B cell (primary cell): ENCODE measurements at regions of chr7 and their contacts with region 1.

Region 1: GRCh38 chr7:1065263-1066260 is 21.2 kb downstream of the GPR146 start:
- DNase-seq: peak; percentile 88
- ATAC-seq: peak; percentile 68
- H3K4me3 ChIP-seq: peak overlapping the region in 3 of 5 experiments; percentile 12 to 47 (median 31)
- H3K4me3 Mint-ChIP-seq: peak overlapping the region; percentile 80
- H3K27ac ChIP-seq: no peak overlapping the region
- H3K27ac Mint-ChIP-seq: peak overlapping the region; percentile 57
- H3K4me1 ChIP-seq: peaks cover 30 to 42% of the 10 kb centered on the region in 2 donors
- H3K4me1 Mint-ChIP-seq: peaks cover 44% of the 10 kb centered on the region
- H3K27me3 ChIP-seq: peaks cover 0 to 33% (median 14%) of the 10 kb centered on the region in 4 experiments
- H3K27me3 Mint-ChIP-seq: peaks cover 18% of the 10 kb centered on the region
- CTCF ChIP-seq: peak; percentile 90

Region 2: GRCh38 chr7:974820-975681 is 90.5 kb before region 1 on chr7 and contains the start of gene COX19:
- CTCF ChIA-PET with region 1: interaction called, 23 read pairs
- POLR2A ChIA-PET with region 1: no interaction called
- intact Hi-C with region 1: no loop called
- DNase-seq: peak; percentile 91
- ATAC-seq: peak; percentile 86
- H3K4me3 ChIP-seq: peak within 1 kb of the TSS; percentile 66 to 99 (median 91)
- H3K4me3 Mint-ChIP-seq: peak within 1 kb of the TSS; percentile 94
- H3K27ac ChIP-seq: peak within 1 kb of the TSS; percentile 93 to 95
- H3K27ac Mint-ChIP-seq: peak within 1 kb of the TSS; percentile 92
- H3K4me1 ChIP-seq: peaks cover 16 to 22% of the 10 kb centered on the region in 2 donors
- H3K4me1 Mint-ChIP-seq: peaks cover 24% of the 10 kb centered on the region
- H3K27me3 ChIP-seq: peaks cover 0 to 3% (median 0%) of the 10 kb centered on the region in 4 experiments
- H3K27me3 Mint-ChIP-seq: no peaks in the 10 kb centered on the region
- CTCF ChIP-seq: no peak
- total RNA-seq, gene COX19: 38.3 and 44.6 TPM in 2 replicates

Region 3: GRCh38 chr7:1028031-1028770 is 37.4 kb before region 1 on chr7:
- CTCF ChIA-PET with region 1: interaction called, 57 read pairs
- POLR2A ChIA-PET with region 1: interaction called, 10 read pairs
- intact Hi-C with region 1: loop called (anchors 1 kb)
- DNase-seq: peak; percentile 89
- ATAC-seq: peak; percentile 53
- H3K4me3 ChIP-seq: peak overlapping the region in 4 of 5 experiments; percentile 50 to 65 (median 58)
- H3K4me3 Mint-ChIP-seq: peak overlapping the region; percentile 89
- H3K27ac ChIP-seq: peak overlapping the region; percentile 47 to 56
- H3K27ac Mint-ChIP-seq: peak overlapping the region; percentile 82
- H3K4me1 ChIP-seq: peaks cover 59 to 72% of the 10 kb centered on the region in 2 donors
- H3K4me1 Mint-ChIP-seq: peaks cover 64% of the 10 kb centered on the region
- H3K27me3 ChIP-seq: peaks cover 0 to 4% (median 1%) of the 10 kb centered on the region in 4 experiments
- H3K27me3 Mint-ChIP-seq: peaks cover 3% of the 10 kb centered on the region
- CTCF ChIP-seq: no peak

Region 4: DNA sequence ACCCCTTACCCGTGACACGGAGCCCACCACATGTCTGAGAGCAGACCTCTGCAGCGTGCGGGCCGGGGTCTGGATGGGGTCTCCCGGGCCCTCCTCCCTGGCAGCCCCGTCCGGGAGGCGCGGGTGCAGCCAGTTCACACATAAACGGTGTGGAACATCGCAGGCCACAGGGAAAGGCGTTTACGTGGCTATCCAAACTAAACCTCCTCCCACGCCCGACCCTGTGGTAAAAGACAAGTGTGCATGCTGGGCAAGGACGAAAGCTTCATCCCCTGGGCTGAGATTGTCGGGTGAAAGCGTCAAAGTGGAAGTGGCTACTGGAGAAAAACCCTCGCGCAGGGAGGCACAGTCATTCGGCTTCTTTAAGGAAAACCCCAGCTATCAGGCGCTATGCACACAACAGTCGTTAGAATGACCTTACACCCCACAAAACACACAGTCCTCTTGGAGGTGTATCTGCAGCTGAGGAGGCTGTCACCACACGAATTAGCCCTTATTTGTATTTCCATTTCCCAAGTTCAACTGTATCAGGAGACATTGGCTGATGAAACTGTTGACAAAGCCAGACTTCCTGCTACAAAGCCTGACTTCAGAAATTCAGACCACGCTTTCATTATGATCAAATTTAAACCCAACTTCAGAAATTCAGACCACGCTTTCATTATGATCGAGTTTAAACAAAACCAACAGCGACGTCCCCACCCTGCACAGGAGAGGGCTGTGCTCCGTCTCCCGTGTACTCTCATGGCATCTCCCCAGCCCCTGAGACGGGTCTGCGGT is 37.6 kb after region 1 on chr7:
- CTCF ChIA-PET with region 1: interaction called, 13 read pairs
- POLR2A ChIA-PET with region 1: no interaction called
- intact Hi-C with region 1: no loop called
- DNase-seq: peak; percentile 51
- ATAC-seq: peak; percentile 28
- H3K4me3 ChIP-seq: peak overlapping the region in 3 of 5 experiments; percentile 0 to 39 (median 20)
- H3K4me3 Mint-ChIP-seq: peak overlapping the region; percentile 84
- H3K27ac ChIP-seq: no peak overlapping the region
- H3K27ac Mint-ChIP-seq: no peak overlapping the region
- H3K4me1 ChIP-seq: peaks cover 7 to 31% of the 10 kb centered on the region in 2 donors
- H3K4me1 Mint-ChIP-seq: peaks cover 35% of the 10 kb centered on the region
- H3K27me3 ChIP-seq: peaks cover 0 to 6% (median 3%) of the 10 kb centered on the region in 4 experiments
- H3K27me3 Mint-ChIP-seq: peaks cover 7% of the 10 kb centered on the region
- CTCF ChIP-seq: no peak

Region 5: GRCh38 chr7:1175967-1176851 is 110.6 kb after region 1 on chr7:
- CTCF ChIA-PET with region 1: interaction called, 28 read pairs
- POLR2A ChIA-PET with region 1: no interaction called
- intact Hi-C with region 1: loop called (anchors 5 kb)
- DNase-seq: peak; percentile 80
- ATAC-seq: peak; percentile 73
- H3K4me3 ChIP-seq: peak overlapping the region in 3 of 5 experiments; percentile 11 to 24 (median 15)
- H3K4me3 Mint-ChIP-seq: peak overlapping the region; percentile 57
- H3K27ac ChIP-seq: no peak overlapping the region
- H3K27ac Mint-ChIP-seq: no peak overlapping the region
- H3K4me1 ChIP-seq: peaks cover 8 to 11% of the 10 kb centered on the region in 2 donors
- H3K4me1 Mint-ChIP-seq: peaks cover 10% of the 10 kb centered on the region
- H3K27me3 ChIP-seq: peaks cover 0 to 14% (median 5%) of the 10 kb centered on the region in 4 experiments
- H3K27me3 Mint-ChIP-seq: peaks cover 17% of the 10 kb centered on the region
- CTCF ChIP-seq: peak; percentile 86